Heart left ventricle (tissue), 16 donors: ENCODE measurements at regions of chr2 and their contacts with region 1.

Region 1: DNA sequence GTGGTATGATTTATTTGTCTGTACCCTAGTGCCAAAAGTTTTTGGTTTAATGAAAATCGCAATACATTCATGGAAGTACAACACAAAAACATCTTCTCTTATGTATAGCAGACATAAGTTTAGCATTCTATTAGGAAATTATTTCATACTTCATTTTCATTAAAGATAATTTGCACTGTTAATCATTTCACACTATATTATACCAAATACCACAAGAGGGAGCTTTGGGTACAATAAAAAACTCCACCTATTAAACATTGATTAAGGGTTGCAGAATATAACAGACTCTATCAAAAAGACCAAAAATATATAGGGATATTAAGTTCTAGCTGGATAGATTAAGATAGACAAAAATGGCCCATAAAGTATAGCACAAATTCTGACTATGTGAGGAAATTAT is 79.0 kb downstream of the SLC66A3 start:
- DNase-seq: no peak
- ATAC-seq: peak in 2 of 4 donors; percentile 49 to 59
- H3K4me3 ChIP-seq: no peak overlapping the region
- H3K27ac ChIP-seq: no peak overlapping the region
- H3K4me1 ChIP-seq: peaks cover 0 to 26% (median 12%) of the 10 kb centered on the region in 12 donors
- H3K27me3 ChIP-seq: no peaks in the 10 kb centered on the region
- CTCF ChIP-seq: peak; percentile 35 to 79 (median 62)
- POLR2A ChIP-seq: no peak

Region 2: GRCh38 chr2:11155381-11156035 is 78.8 kb before region 1 on chr2 and contains the start of gene SLC66A3:
- intact Hi-C with region 1: no loop called
- DNase-seq: no peak
- ATAC-seq: peak; percentile 74 to 89 (median 84)
- H3K4me3 ChIP-seq: peak within 1 kb of the TSS; percentile 50 to 98 (median 87)
- H3K27ac ChIP-seq: peak within 1 kb of the TSS; percentile 66 to 97 (median 94)
- H3K4me1 ChIP-seq: peaks cover 0 to 28% (median 15%) of the 10 kb centered on the region in 12 donors
- H3K27me3 ChIP-seq: no peaks in the 10 kb centered on the region
- CTCF ChIP-seq: peak in 3 of 12 donors; percentile 20 to 34 (median 25)
- POLR2A ChIP-seq: peak in 1 of 2 donors; percentile 89
- total RNA-seq, gene SLC66A3: 4.7 to 19.5 (median 9.7) TPM

Region 3: GRCh38 chr2:11411768-11412448 is 177.6 kb after region 1 on chr2:
- intact Hi-C with region 1: loop called (anchors 1 to 2 kb)
- DNase-seq: peak in 3 of 5 donors; percentile 61 to 73 (median 67)
- ATAC-seq: peak; percentile 54 to 81 (median 70)
- H3K4me3 ChIP-seq: peak overlapping the region in 11 of 12 donors; percentile 17 to 68 (median 46)
- H3K27ac ChIP-seq: peak overlapping the region in 2 of 12 donors; percentile 1 to 6
- H3K4me1 ChIP-seq: peaks cover 0 to 19% (median 8%) of the 10 kb centered on the region in 12 donors
- H3K27me3 ChIP-seq: no peaks in the 10 kb centered on the region
- CTCF ChIP-seq: peak; percentile 76 to 95 (median 86)
- POLR2A ChIP-seq: no peak

Region 4: DNA sequence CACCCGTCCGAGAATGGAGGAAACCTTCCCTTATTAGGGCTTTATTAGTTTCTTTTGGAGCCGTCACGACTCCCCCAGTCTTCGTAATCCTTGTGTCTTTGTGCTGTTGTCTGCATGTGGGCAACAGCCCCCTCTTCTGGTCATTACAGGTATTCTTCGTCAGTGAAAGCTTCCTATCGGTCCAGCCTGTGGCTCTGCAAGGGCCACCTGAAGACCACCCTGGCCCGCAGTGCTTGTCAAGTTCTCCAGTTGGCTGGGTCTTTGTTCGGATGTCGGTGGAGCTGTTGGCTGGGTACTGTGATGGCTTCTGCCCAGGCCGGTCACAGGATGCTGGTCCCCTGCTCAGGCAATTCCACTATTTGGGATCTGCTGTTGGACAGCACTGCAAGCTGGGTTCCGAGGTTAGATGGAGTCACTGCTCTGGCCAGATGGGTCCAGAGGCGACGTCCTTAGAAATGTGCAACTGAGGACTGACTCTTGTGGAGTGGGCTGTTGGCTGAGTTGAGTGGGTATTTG is 212.5 kb after region 1 on chr2:
- intact Hi-C with region 1: loop called in 4 of 10 experiments (anchors 2 to 10 kb)
- DNase-seq: peak in 4 of 5 donors; percentile 36 to 44 (median 40)
- ATAC-seq: peak; percentile 47 to 84 (median 77)
- H3K4me3 ChIP-seq: no peak overlapping the region
- H3K27ac ChIP-seq: no peak overlapping the region
- H3K4me1 ChIP-seq: no peaks in the 10 kb centered on the region
- H3K27me3 ChIP-seq: no peaks in the 10 kb centered on the region
- CTCF ChIP-seq: peak; percentile 68 to 89 (median 82)
- POLR2A ChIP-seq: no peak